Naive thymus-derived CD4-positive, alpha-beta T cell (primary cell): ENCODE measurements at regions of chr1 and their contacts with region 1.

Region 1: DNA sequence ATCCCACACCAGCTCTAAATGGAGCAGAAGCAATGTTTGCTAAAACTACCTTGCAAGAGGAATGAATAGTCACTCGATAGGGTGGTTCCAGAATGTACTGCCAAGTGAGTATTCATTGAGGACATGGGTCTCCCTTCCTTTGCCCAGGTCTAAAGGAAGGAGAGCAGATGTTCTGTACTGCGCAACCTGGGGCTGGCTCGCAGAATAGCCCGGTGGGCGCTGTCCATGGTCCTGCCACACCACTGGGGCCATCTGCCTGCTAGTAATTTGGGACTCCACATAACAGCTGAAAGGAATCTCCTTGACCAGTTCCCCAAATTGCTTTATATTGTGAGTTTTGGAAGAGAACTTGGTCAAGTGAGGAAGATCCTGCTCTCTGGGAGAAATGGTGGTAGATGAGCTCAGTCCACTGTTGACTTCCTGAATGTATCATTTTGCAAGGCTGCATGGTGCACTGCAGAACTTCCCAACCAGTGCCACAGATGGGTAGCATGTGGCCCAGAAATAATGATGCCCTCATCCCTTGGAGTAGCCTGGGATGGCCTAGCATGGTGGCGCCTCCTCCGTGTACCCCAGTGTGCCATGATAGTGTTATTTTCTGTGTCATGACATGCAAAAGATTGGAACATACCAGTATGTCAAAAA is 5.7 kb downstream of the SLC6A17 start:
- DNase-seq: peak in 7 of 9 donors; percentile 10 to 69 (median 27)
- ATAC-seq: peak; percentile 50
- H3K4me3 ChIP-seq: no peak overlapping the region
- H3K4me3 Mint-ChIP-seq: no peak overlapping the region
- H3K27ac ChIP-seq: no peak overlapping the region
- H3K27ac Mint-ChIP-seq: no peak overlapping the region
- H3K4me1 ChIP-seq: no peaks in the 10 kb centered on the region
- H3K4me1 Mint-ChIP-seq: peaks cover 0 to 3% (median 0%) of the 10 kb centered on the region in 7 donors
- H3K27me3 ChIP-seq: no peaks in the 10 kb centered on the region
- H3K27me3 Mint-ChIP-seq: peaks cover 51 to 76% (median 65%) of the 10 kb centered on the region in 5 donors

Region 2: DNA sequence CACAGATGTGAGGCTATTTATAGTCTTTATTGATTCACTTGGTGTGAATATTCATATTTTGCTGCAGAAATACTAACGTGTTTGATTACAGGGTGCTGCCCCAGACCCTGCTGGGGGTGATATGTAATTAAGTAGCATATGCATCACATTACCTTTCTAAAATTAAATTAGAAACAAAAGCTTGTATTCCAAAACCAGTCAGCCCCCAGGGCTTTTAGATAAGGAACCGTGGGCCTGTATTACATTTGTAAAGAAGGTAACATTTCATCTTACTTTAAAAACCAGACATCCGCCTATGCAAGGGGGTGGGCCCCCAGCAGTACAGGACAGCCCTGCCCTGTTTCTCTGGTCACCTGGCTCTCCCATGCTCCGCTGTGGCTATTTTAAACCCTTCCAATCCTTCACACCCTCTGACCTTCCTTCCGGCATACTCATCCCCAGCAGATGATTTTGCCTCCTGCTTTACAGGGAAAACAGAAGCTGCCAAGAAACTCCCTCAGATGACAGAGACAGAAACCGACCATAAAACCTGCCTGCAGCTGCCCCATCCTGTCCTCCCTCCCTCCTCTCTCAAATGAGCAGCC is 32.1 kb after region 1 on chr1:
- CTCF ChIA-PET with region 1: no interaction called
- POLR2A ChIA-PET with region 1: no interaction called
- intact Hi-C with region 1: no loop called
- DNase-seq: no peak
- ATAC-seq: no peak
- H3K4me3 ChIP-seq: no peak overlapping the region
- H3K4me3 Mint-ChIP-seq: no peak overlapping the region
- H3K27ac ChIP-seq: no peak overlapping the region
- H3K27ac Mint-ChIP-seq: no peak overlapping the region
- H3K4me1 ChIP-seq: no peaks in the 10 kb centered on the region
- H3K4me1 Mint-ChIP-seq: no peaks in the 10 kb centered on the region
- H3K27me3 ChIP-seq: no peaks in the 10 kb centered on the region
- H3K27me3 Mint-ChIP-seq: peaks cover 0 to 28% (median 11%) of the 10 kb centered on the region in 5 donors

Region 3: GRCh38 chr1:110746579-110747160 is 590.7 kb after region 1 on chr1:
- CTCF ChIA-PET with region 1: no interaction called
- POLR2A ChIA-PET with region 1: no interaction called
- intact Hi-C with region 1: loop called in 1 of 2 experiments (anchors 5 kb)
- DNase-seq: peak; percentile 14 to 62 (median 44)
- ATAC-seq: peak; percentile 46
- H3K4me3 ChIP-seq: no peak overlapping the region
- H3K4me3 Mint-ChIP-seq: no peak overlapping the region
- H3K27ac ChIP-seq: no peak overlapping the region
- H3K27ac Mint-ChIP-seq: no peak overlapping the region
- H3K4me1 ChIP-seq: no peaks in the 10 kb centered on the region
- H3K4me1 Mint-ChIP-seq: no peaks in the 10 kb centered on the region
- H3K27me3 ChIP-seq: no peaks in the 10 kb centered on the region
- H3K27me3 Mint-ChIP-seq: peaks cover 25 to 49% (median 30%) of the 10 kb centered on the region in 5 donors